Vagina (tissue), 2 donors: ENCODE measurements at regions of chr1 and their contacts with region 1.

Region 1: GRCh38 chr1:202810615-202811295 is at the start of gene PCAT6:
- DNase-seq: peak in 1 of 2 donors; percentile 96
- H3K4me3 ChIP-seq: peak within 1 kb of the TSS; percentile 72 to 81
- H3K27ac ChIP-seq: peak within 1 kb of the TSS; percentile 84
- H3K4me1 ChIP-seq: peaks cover 20% of the 10 kb centered on the region
- H3K27me3 ChIP-seq: no peaks in the 10 kb centered on the region
- CTCF ChIP-seq: no peak
- POLR2A ChIP-seq: peak in 1 of 2 donors; percentile 56
- total RNA-seq, gene PCAT6: not detected

Region 2: GRCh38 chr1:202888531-202889360 is 78.0 kb after region 1 on chr1 and contains the start of gene RABIF:
- intact Hi-C with region 1: loop called (anchors 10 kb)
- DNase-seq: peak; percentile 93 to 98
- H3K4me3 ChIP-seq: peak within 1 kb of the TSS; percentile 75 to 83
- H3K27ac ChIP-seq: peak within 1 kb of the TSS; percentile 97
- H3K4me1 ChIP-seq: peaks cover 13% of the 10 kb centered on the region
- H3K27me3 ChIP-seq: no peaks in the 10 kb centered on the region
- CTCF ChIP-seq: peak in 1 of 3 experiments; percentile 31
- POLR2A ChIP-seq: peak in 1 of 2 donors; percentile 79
- total RNA-seq, gene RABIF: 7.4 TPM

Region 3: GRCh38 chr1:203663294-203663693 is 852.5 kb after region 1 on chr1:
- intact Hi-C with region 1: no loop called
- DNase-seq: no peak
- H3K4me3 ChIP-seq: no peak overlapping the region
- H3K27ac ChIP-seq: peak overlapping the region; percentile 60
- H3K4me1 ChIP-seq: peaks cover 88% of the 10 kb centered on the region
- H3K27me3 ChIP-seq: no peaks in the 10 kb centered on the region
- CTCF ChIP-seq: no peak
- POLR2A ChIP-seq: no peak